HepG2 (cell line): ENCODE measurements at regions of chrX and their contacts with region 1.

Region 1: GRCh38 chrX:43958529-43958928 is 14.7 kb downstream of the NDP start:
- DNase-seq: peak; percentile 72
- ATAC-seq: peak; percentile 90
- H3K4me3 ChIP-seq: no peak overlapping the region
- H3K27ac ChIP-seq: no peak overlapping the region
- H3K4me1 ChIP-seq: no peaks in the 10 kb centered on the region
- H3K27me3 ChIP-seq: no peaks in the 10 kb centered on the region
- CTCF ChIP-seq: peak; percentile 74
- EP300 ChIP-seq: no peak
- POLR2A ChIP-seq: no peak
- RAD21 ChIP-seq: 0 out of 2 replicates have a peak, but pooled peaks have one; percentile 29

Region 2: DNA sequence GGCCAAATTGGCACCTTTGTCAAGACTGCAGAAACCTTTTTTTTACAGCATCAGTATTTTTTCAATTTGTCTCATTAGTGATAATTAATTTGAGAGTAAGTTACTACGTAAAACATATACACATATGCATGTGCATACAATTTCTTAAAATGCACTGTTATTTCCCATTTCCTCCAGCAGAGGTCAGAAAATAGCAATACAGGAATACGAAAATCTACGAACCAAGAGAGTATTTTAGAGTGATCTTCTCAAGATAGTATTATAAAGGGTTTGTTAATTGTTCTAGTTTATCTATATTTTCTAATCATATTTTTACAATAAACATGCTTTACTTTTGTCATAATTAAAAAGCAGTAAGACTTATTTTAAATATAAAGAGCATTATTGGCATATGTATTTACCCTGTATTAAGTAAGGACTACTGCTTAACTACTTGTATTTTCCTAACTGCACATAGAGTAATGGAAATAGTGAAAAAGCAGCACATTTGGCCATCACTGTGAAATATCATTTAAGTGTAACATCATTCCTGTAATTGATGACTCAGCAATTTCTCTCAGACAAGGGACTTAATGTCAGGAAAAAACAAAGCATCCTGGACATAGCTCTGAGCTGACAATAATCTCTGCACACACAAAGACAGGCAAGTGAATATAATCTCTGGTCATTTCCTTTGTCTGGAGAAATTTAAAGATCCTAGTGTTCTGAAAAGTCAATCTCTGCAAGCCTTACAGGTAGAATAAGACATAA is 121.9 kb before region 1 on chrX:
- CTCF ChIA-PET with region 1: no interaction called
- POLR2A ChIA-PET with region 1: no interaction called
- in situ Hi-C with region 1: no loop called
- intact Hi-C with region 1: loop called (anchors 5 kb)
- DNase-seq: peak; percentile 12
- ATAC-seq: no peak
- H3K4me3 ChIP-seq: no peak overlapping the region
- H3K27ac ChIP-seq: no peak overlapping the region
- H3K4me1 ChIP-seq: no peaks in the 10 kb centered on the region
- H3K27me3 ChIP-seq: no peaks in the 10 kb centered on the region
- CTCF ChIP-seq: peak; percentile 56
- EP300 ChIP-seq: no peak
- POLR2A ChIP-seq: no peak
- RAD21 ChIP-seq: no peak

Region 3: DNA sequence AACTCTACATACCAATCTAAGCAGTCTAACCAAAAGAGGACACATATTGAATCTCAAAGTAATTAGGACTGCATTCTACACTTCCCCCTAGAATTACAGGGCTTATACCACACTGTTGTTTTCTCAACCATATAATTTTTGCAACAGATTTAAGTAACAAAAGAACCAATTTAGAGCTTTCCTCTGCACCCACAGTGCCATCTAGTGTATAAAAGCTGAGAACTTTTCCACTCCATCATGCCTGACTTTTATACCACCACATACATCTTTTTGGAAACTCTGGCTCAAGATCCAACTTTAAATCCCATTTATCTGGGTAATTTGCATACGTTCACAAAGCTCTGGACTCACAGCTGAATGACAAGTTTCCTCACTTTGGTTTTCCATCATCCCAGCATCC is 285.5 kb after region 1 on chrX:
- CTCF ChIA-PET with region 1: interaction called, 4 read pairs
- POLR2A ChIA-PET with region 1: no interaction called
- in situ Hi-C with region 1: no loop called
- intact Hi-C with region 1: loop called (anchors 1 kb)
- DNase-seq: no peak
- ATAC-seq: no peak
- H3K4me3 ChIP-seq: no peak overlapping the region
- H3K27ac ChIP-seq: no peak overlapping the region
- H3K4me1 ChIP-seq: no peaks in the 10 kb centered on the region
- H3K27me3 ChIP-seq: no peaks in the 10 kb centered on the region
- CTCF ChIP-seq: peak; percentile 29
- EP300 ChIP-seq: no peak
- POLR2A ChIP-seq: no peak
- RAD21 ChIP-seq: no peak

Region 4: GRCh38 chrX:44352758-44353157 is 394.2 kb after region 1 on chrX:
- CTCF ChIA-PET with region 1: no interaction called
- POLR2A ChIA-PET with region 1: no interaction called
- in situ Hi-C with region 1: loop called (anchors 25 kb)
- intact Hi-C with region 1: no loop called
- DNase-seq: no peak
- ATAC-seq: no peak
- H3K4me3 ChIP-seq: no peak overlapping the region
- H3K27ac ChIP-seq: no peak overlapping the region
- H3K4me1 ChIP-seq: no peaks in the 10 kb centered on the region
- H3K27me3 ChIP-seq: no peaks in the 10 kb centered on the region
- CTCF ChIP-seq: no peak
- EP300 ChIP-seq: no peak
- POLR2A ChIP-seq: no peak
- RAD21 ChIP-seq: no peak

Region 5: DNA sequence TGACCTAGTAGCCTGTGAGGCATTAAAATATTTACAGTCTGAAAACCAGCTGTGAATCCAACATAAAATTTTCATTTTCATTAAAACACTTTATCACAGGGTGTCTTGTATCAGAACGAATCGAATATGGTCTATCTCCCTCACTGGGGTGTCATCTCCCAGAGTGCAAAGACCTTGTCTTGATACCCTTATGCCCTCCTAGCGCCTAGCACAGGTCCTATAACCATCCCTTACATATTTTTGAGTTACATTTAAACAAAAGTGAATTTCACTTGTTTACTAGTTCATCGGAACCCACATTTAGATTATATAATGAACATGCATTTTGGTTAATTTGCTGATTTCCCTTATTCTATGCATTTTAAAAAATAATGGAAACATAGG is 1228.1 kb after region 1 on chrX:
- CTCF ChIA-PET with region 1: no interaction called
- POLR2A ChIA-PET with region 1: no interaction called
- in situ Hi-C with region 1: loop called (anchors 25 kb)
- intact Hi-C with region 1: no loop called
- DNase-seq: no peak
- ATAC-seq: no peak; the same call in 2 of the 3 replicates
- H3K4me3 ChIP-seq: no peak overlapping the region; a peak in 1 of 6 replicates
- H3K27ac ChIP-seq: no peak overlapping the region
- H3K4me1 ChIP-seq: no peaks in the 10 kb centered on the region
- H3K27me3 ChIP-seq: no peaks in the 10 kb centered on the region
- CTCF ChIP-seq: no peak
- EP300 ChIP-seq: no peak
- POLR2A ChIP-seq: no peak
- RAD21 ChIP-seq: no peak